Naive thymus-derived CD4-positive, alpha-beta T cell (primary cell): ENCODE measurements at regions of chr6 and their contacts with region 1.

Region 1: GRCh38 chr6:35688581-35689322 is at the start of gene FKBP5:
- DNase-seq: peak; percentile 76 to 92 (median 82)
- ATAC-seq: peak; percentile 96
- H3K4me3 ChIP-seq: peak within 1 kb of the TSS; percentile 99
- H3K4me3 Mint-ChIP-seq: peak within 1 kb of the TSS; percentile 90 to 100 (median 97)
- H3K27ac ChIP-seq: peak within 1 kb of the TSS; percentile 92
- H3K27ac Mint-ChIP-seq: peak within 1 kb of the TSS; percentile 89 to 98 (median 95)
- H3K4me1 ChIP-seq: peaks cover 5 to 13% of the 10 kb centered on the region in 2 donors
- H3K4me1 Mint-ChIP-seq: peaks cover 6 to 18% (median 15%) of the 10 kb centered on the region in 7 donors
- H3K27me3 ChIP-seq: no peaks in the 10 kb centered on the region
- H3K27me3 Mint-ChIP-seq: no peaks in the 10 kb centered on the region
- total RNA-seq, gene FKBP5: 56.7 to 83.3 (median 79.4) TPM

Region 2: DNA sequence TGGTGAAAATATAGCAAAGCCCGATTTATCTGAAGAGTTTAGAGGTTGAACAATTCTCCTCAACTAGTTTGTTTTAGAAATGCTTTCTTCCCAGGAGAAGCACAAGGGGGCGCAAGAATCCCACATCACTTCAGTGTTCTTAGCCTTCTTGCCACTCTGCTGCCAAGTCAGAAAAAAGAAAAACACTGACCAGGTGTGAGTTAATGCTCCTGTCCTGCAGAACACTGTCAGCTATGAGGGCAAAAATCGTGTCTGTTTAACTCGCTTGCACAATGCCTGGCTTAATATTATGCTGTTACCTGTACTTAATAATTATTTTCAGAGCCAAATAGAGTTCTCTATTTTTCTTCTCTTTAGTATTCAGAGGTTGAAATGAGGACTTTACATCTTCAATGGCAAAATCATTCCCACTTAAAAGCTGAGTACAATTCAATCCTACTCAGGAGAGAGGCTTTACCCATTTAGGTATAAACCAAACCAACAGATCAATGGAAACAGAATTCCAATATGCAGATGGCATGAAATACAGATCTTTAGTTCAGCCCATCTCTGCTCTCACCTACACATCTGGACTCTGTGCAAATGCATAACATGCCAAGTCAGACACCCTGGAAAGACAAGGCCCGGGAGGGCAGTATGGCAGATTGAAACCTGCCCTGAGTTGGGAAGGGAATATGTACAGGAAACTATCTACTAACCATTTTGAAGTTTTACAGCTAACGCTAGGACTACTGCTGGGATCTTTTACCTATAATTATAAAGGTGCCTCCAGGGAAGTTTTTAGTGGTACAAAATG is 104.7 kb before region 1 on chr6:
- CTCF ChIA-PET with region 1: interaction called, 5 read pairs
- POLR2A ChIA-PET with region 1: interaction called, 5 read pairs
- intact Hi-C with region 1: loop called (anchors 1 to 2 kb)
- DNase-seq: peak; percentile 43 to 81 (median 75)
- ATAC-seq: peak; percentile 84
- H3K4me3 ChIP-seq: no peak overlapping the region
- H3K4me3 Mint-ChIP-seq: peak overlapping the region in 8 of 10 donors; percentile 16 to 62 (median 46)
- H3K27ac ChIP-seq: peak overlapping the region; percentile 16
- H3K27ac Mint-ChIP-seq: peak overlapping the region; percentile 38 to 94 (median 92)
- H3K4me1 ChIP-seq: peaks cover 7 to 57% of the 10 kb centered on the region in 2 donors
- H3K4me1 Mint-ChIP-seq: peaks cover 31 to 92% (median 79%) of the 10 kb centered on the region in 7 donors
- H3K27me3 ChIP-seq: no peaks in the 10 kb centered on the region
- H3K27me3 Mint-ChIP-seq: no peaks in the 10 kb centered on the region

Region 3: GRCh38 chr6:35624341-35625070 is 64.2 kb before region 1 on chr6:
- CTCF ChIA-PET with region 1: interaction called, 5 read pairs
- POLR2A ChIA-PET with region 1: interaction called, 11 read pairs
- intact Hi-C with region 1: loop called in 1 of 2 experiments (anchors 2 kb)
- DNase-seq: peak in 7 of 9 donors; percentile 40 to 75 (median 70)
- ATAC-seq: peak; percentile 88
- H3K4me3 ChIP-seq: no peak overlapping the region
- H3K4me3 Mint-ChIP-seq: peak overlapping the region in 9 of 10 donors; percentile 11 to 49 (median 34)
- H3K27ac ChIP-seq: peak overlapping the region; percentile 66
- H3K27ac Mint-ChIP-seq: peak overlapping the region; percentile 64 to 93 (median 90)
- H3K4me1 ChIP-seq: peaks cover 5 to 35% of the 10 kb centered on the region in 2 donors
- H3K4me1 Mint-ChIP-seq: peaks cover 13 to 66% (median 55%) of the 10 kb centered on the region in 7 donors
- H3K27me3 ChIP-seq: no peaks in the 10 kb centered on the region
- H3K27me3 Mint-ChIP-seq: no peaks in the 10 kb centered on the region

Region 4: GRCh38 chr6:35663447-35664235 is 25.1 kb before region 1 on chr6:
- CTCF ChIA-PET with region 1: interaction called, 10 read pairs
- POLR2A ChIA-PET with region 1: interaction called, 31 read pairs
- intact Hi-C with region 1: loop called in 1 of 2 experiments (anchors 1 kb)
- DNase-seq: peak in 6 of 9 donors; percentile 28 to 45 (median 36)
- ATAC-seq: peak; percentile 82
- H3K4me3 ChIP-seq: peak overlapping the region; percentile 21
- H3K4me3 Mint-ChIP-seq: no peak overlapping the region
- H3K27ac ChIP-seq: peak overlapping the region; percentile 76
- H3K27ac Mint-ChIP-seq: no peak overlapping the region
- H3K4me1 ChIP-seq: peaks cover 25 to 46% of the 10 kb centered on the region in 2 donors
- H3K4me1 Mint-ChIP-seq: peaks cover 8 to 27% (median 18%) of the 10 kb centered on the region in 7 donors
- H3K27me3 ChIP-seq: no peaks in the 10 kb centered on the region
- H3K27me3 Mint-ChIP-seq: no peaks in the 10 kb centered on the region

Region 5: DNA sequence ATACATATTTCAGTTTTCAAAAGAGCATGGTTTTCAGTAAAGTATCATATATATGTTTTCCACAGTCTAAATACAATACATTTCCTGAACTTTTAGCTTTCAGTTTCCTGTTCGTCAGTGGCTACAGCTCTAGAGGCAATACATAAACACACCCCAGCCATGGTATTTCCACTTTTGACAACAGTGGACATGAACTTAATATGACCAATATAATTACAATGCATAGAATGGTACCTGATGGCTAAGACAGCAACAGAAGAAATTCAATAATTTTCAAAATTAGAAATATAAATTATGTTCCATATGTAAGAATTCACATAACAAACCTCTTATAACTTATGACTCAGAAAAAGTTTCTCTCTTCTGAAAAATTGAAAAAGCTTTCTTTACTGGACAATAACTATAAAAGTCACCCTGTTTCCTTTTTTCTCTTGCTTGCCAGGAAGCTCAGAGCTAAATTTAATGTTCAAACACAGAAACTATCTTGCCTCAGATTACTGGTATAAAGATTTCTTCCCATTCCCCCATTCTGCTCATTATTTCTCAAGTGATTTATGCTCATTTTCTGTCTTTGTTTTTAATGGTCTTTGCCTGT is 19.2 kb before region 1 on chr6:
- CTCF ChIA-PET with region 1: interaction called, 10 read pairs
- POLR2A ChIA-PET with region 1: interaction called, 31 read pairs
- intact Hi-C with region 1: loop called (anchors 1 kb)
- DNase-seq: peak in 4 of 9 donors; percentile 29 to 57 (median 38)
- ATAC-seq: peak; percentile 78
- H3K4me3 ChIP-seq: peak overlapping the region; percentile 43
- H3K4me3 Mint-ChIP-seq: peak overlapping the region in 9 of 10 donors; percentile 56 to 88 (median 81)
- H3K27ac ChIP-seq: peak overlapping the region; percentile 79
- H3K27ac Mint-ChIP-seq: peak overlapping the region in 7 of 9 donors; percentile 84 to 98 (median 93)
- H3K4me1 ChIP-seq: peaks cover 33 to 48% of the 10 kb centered on the region in 2 donors
- H3K4me1 Mint-ChIP-seq: peaks cover 32 to 63% (median 48%) of the 10 kb centered on the region in 7 donors
- H3K27me3 ChIP-seq: no peaks in the 10 kb centered on the region
- H3K27me3 Mint-ChIP-seq: no peaks in the 10 kb centered on the region

Region 6: DNA sequence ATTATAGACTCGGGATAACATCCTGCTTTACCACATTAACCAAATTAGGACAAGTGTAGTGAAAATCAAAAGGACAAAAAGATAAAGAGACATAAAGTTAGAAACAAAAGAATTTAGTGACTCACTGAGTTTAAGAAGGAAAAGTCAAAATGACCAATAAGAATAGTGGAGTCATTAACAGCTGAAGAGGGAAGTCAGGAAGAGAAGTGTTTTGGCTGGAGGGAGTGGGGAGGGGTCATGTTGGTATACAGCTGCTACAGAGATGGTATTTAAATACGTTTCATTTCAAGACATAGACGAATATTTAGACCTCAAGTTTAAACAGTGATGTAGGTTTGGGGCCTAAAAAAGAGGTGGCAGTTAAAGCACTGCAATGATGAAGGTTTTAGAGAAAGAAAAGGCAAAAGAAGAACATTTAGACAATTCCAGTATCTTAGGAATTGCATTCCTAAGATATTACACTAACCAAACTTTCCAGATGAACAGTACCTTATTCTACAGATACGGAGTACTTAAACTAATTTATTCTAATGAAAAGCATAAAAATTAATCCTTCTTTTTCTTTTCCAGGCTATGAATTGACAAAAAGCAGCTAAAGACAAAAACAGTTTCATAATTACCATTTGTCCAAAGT is 10.6 kb before region 1 on chr6:
- CTCF ChIA-PET with region 1: interaction called, 6 read pairs
- POLR2A ChIA-PET with region 1: interaction called, 16 read pairs
- intact Hi-C with region 1: loop called (anchors 1 kb)
- DNase-seq: no peak
- ATAC-seq: no peak
- H3K4me3 ChIP-seq: no peak overlapping the region
- H3K4me3 Mint-ChIP-seq: peak overlapping the region; percentile 0 to 74 (median 66)
- H3K27ac ChIP-seq: peak overlapping the region; percentile 43
- H3K27ac Mint-ChIP-seq: peak overlapping the region in 7 of 9 donors; percentile 1 to 90 (median 77)
- H3K4me1 ChIP-seq: peaks cover 25 to 72% of the 10 kb centered on the region in 2 donors
- H3K4me1 Mint-ChIP-seq: peaks cover 47 to 100% (median 91%) of the 10 kb centered on the region in 7 donors
- H3K27me3 ChIP-seq: no peaks in the 10 kb centered on the region
- H3K27me3 Mint-ChIP-seq: no peaks in the 10 kb centered on the region